HCT116 (cell line): ENCODE measurements at regions of chr6 and their contacts with region 1.

Region 1: GRCh38 chr6:36874443-36875249 is at the start of gene PPIL1:
- DNase-seq: peak; percentile 88
- ATAC-seq: peak; percentile 91
- H3K4me3 ChIP-seq: peak within 1 kb of the TSS; percentile 68 to 84
- H3K27ac ChIP-seq: peak within 1 kb of the TSS; percentile 93
- H3K4me1 ChIP-seq: peaks cover 8 to 17% of the 10 kb centered on the region in 2 experiments; a peak in 3 of 4 replicates
- H3K27me3 ChIP-seq: no peaks in the 10 kb centered on the region
- CTCF ChIP-seq: no peak
- POLR2A ChIP-seq: peak; percentile 30
- RAD21 ChIP-seq: no peak
- total RNA-seq, gene PPIL1: 42.0 TPM

Region 2: GRCh38 chr6:36633915-36634314 is 240.7 kb before region 1 on chr6:
- CTCF ChIA-PET with region 1: no interaction called
- POLR2A ChIA-PET with region 1: no interaction called
- RAD21 ChIA-PET with region 1: no interaction called
- intact Hi-C with region 1: no loop called
- DNase-seq: no peak
- ATAC-seq: peak; percentile 32; the same call in 1 of the 2 replicates
- H3K4me3 ChIP-seq: no peak overlapping the region
- H3K27ac ChIP-seq: no peak overlapping the region
- H3K4me1 ChIP-seq: peaks cover 4 to 10% of the 10 kb centered on the region in 2 experiments; a peak in 2 of 4 replicates
- H3K27me3 ChIP-seq: no peaks in the 10 kb centered on the region
- CTCF ChIP-seq: no peak
- POLR2A ChIP-seq: no peak
- RAD21 ChIP-seq: no peak

Region 3: DNA sequence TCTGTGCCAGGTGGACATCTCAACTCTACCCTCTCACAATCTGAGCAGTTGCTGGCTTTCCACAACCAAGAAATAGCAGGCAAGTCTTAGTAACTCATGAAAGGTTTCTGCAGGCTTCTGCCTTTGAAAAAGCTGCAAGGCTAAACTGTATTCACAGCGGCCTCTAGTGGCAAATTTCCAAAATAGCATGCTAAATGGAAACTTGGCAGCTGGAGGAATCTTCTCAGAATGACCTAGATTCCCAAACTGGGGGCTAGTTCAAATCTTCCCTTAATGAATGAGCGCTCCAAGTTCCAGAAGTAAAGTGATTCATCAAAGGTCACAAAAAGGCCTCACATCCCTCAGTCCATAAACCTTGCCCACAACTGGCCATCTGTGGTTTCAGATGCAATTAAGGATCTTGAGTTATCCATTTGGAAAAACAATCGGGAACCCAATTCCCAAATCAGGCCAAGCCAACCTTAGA is 23.5 kb before region 1 on chr6:
- CTCF ChIA-PET with region 1: interaction called, 21 read pairs
- POLR2A ChIA-PET with region 1: no interaction called
- RAD21 ChIA-PET with region 1: no interaction called
- intact Hi-C with region 1: no loop called
- DNase-seq: peak; percentile 37
- ATAC-seq: peak; percentile 44; the same call in 1 of the 2 replicates
- H3K4me3 ChIP-seq: no peak overlapping the region
- H3K27ac ChIP-seq: no peak overlapping the region
- H3K4me1 ChIP-seq: no peaks in the 10 kb centered on the region; a peak in 1 of 4 replicates
- H3K27me3 ChIP-seq: no peaks in the 10 kb centered on the region
- CTCF ChIP-seq: peak; percentile 62 to 88 (median 76); a peak in 5 of 6 replicates
- POLR2A ChIP-seq: no peak
- RAD21 ChIP-seq: peak; percentile 71

Region 4: DNA sequence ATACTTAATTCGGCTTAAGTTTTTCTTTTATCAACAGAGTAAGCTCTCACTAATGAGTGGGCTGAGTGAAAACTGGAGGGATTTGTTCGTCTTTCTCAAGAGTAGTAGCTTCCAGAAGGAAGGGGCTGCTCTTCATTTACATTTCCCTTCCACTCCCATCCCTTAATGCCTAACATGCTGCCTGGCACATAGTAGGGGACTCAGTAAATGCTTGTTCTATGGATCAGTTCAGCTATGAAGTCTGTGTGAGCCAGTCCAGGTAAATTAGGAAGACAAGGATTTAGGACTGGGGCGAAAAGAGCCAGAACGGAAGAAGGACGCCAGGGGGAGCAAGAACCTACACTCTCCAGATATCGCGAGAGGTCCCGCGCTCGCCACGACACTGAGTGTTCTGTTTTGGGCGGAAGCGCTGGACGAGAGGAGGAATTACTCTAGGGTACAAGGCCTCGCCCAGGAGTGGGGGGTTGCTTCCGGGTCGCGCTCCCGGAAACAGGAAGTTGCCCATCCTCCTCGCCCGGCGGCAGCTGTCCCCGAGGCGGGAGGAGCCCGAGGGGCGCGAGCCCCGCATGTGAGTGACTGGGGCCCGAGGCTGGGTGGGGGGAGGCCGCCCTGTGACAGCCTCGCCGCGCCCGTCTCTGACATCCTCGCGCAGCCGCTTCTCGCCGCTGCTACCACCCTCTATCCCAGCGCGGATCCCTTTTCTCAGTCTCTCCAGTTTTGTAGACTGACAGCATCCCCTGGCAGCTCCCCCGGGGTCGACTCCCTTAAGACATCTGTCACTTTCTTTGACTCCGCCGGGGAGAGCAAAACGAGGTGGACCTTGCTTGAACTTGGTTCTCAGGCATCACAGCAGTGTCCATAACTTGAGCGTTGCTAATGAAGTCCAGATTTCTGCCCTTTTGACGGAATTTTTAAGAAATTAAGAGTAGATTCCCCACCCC is 11.1 kb after region 1 on chr6 and contains the start of gene C6orf89:
- CTCF ChIA-PET with region 1: interaction called, 29 read pairs
- POLR2A ChIA-PET with region 1: interaction called, 11 read pairs
- RAD21 ChIA-PET with region 1: no interaction called
- intact Hi-C with region 1: no loop called
- DNase-seq: peak; percentile 94
- ATAC-seq: peak; percentile 100
- H3K4me3 ChIP-seq: peak within 1 kb of the TSS; percentile 81 to 88
- H3K27ac ChIP-seq: peak within 1 kb of the TSS; percentile 65
- H3K4me1 ChIP-seq: peaks cover 8 to 18% of the 10 kb centered on the region in 2 experiments; a peak in 3 of 4 replicates
- H3K27me3 ChIP-seq: no peaks in the 10 kb centered on the region
- CTCF ChIP-seq: peak; percentile 80 to 87 (median 87)
- POLR2A ChIP-seq: no peak
- RAD21 ChIP-seq: peak; percentile 73
- total RNA-seq, gene C6orf89: 32.9 TPM